WTC11 (cell line): ENCODE measurements at regions of chr17 and their contacts with region 1.

Region 1: DNA sequence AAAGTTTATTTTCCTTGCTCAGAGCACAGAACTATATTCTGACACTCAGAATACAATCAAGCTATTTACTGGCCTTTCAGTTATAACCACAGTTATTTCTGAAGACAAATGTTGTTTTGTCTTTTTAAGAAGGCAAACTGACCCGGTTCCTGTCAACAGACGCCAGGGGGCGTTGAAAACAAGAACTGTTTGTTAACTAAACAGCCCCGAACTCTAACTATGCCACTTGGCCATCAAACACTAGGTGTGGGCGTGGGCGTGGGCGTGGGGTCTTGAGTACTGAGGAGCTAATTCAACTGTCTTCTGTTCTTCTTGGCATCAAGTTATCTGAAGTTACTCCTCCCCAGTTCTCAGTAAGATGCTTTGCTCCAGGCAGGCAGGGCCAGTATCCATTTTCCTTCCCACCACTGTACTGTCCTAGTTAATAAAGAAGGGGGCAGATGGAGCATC is 63.2 kb upstream of the MTMR4 start:
- DNase-seq: peak; percentile 58
- ATAC-seq: peak; percentile 60
- H3K4me3 Mint-ChIP-seq: no peak overlapping the region
- H3K27ac Mint-ChIP-seq: no peak overlapping the region
- H3K4me1 Mint-ChIP-seq: no peaks in the 10 kb centered on the region
- H3K27me3 Mint-ChIP-seq: no peaks in the 10 kb centered on the region
- CTCF ChIP-seq: peak; percentile 68

Region 2: DNA sequence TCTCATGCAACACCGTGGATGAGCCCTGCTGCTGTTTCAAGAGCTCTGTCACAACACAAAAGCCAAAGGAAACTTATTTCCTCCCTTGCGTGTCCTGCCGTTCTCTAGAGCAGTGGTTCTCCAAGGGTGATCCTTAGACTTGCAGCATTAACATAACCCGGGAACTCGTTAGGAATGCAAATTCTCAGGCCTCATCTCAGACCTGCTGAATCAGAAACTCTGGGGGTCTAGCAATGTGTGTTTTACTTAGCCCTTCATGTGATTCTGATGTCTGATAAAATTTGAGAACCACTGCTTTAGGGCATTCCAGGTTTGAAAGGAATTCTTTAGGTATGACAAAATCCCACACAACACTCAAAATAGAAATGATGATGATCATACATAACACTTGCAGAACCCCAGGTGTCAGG is 11.9 kb before region 1 on chr17:
- CTCF ChIA-PET with region 1: interaction called, 23 read pairs
- POLR2A ChIA-PET with region 1: no interaction called
- DNase-seq: peak; percentile 16
- ATAC-seq: peak; percentile 82
- H3K4me3 Mint-ChIP-seq: peak overlapping the region; percentile 43; the same call in 1 of the 2 replicates
- H3K27ac Mint-ChIP-seq: peak overlapping the region; percentile 96
- H3K4me1 Mint-ChIP-seq: peaks cover 43% of the 10 kb centered on the region
- H3K27me3 Mint-ChIP-seq: no peaks in the 10 kb centered on the region
- CTCF ChIP-seq: no peak